ENCODE measurements at regions of chr21 and their contacts with region 1.

Region 1: DNA sequence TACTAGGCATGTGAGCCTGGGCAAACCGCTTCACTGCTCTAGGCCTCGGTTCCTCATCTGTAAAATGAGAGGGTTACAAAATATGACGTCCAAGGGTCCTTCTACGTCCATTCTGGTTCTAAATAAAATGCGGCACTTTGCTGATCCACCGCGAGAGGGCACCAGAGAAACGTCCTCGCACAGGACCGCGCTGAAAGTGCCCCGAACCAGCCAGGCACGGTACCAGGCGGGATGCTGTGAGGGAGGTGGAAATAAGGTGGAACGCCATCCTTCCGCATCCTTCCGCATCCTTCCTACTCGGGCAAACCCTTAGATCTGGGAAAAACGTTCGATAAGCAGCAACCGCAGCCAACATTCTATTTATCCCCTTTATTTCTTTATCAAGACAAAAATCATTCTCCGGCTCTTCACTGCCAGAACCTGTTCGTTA is 60.3 kb upstream of the KRTAP19-8 start:
- DNase-seq: peak; percentile 64 to 68 (median 64)
- H3K4me3 ChIP-seq: no peak overlapping the region
- H3K4me3 Mint-ChIP-seq: peak overlapping the region; percentile 56 to 82 (median 72)
- H3K27ac ChIP-seq: no peak overlapping the region
- H3K27ac Mint-ChIP-seq: peak overlapping the region; percentile 14 to 75 (median 41)
- H3K4me1 ChIP-seq: peaks cover 29% of the 10 kb centered on the region
- H3K4me1 Mint-ChIP-seq: peaks cover 25 to 36% (median 31%) of the 10 kb centered on the region in 4 donors
- H3K27me3 ChIP-seq: no peaks in the 10 kb centered on the region
- H3K27me3 Mint-ChIP-seq: peaks cover 2 to 4% of the 10 kb centered on the region in 2 donors

Region 2: DNA sequence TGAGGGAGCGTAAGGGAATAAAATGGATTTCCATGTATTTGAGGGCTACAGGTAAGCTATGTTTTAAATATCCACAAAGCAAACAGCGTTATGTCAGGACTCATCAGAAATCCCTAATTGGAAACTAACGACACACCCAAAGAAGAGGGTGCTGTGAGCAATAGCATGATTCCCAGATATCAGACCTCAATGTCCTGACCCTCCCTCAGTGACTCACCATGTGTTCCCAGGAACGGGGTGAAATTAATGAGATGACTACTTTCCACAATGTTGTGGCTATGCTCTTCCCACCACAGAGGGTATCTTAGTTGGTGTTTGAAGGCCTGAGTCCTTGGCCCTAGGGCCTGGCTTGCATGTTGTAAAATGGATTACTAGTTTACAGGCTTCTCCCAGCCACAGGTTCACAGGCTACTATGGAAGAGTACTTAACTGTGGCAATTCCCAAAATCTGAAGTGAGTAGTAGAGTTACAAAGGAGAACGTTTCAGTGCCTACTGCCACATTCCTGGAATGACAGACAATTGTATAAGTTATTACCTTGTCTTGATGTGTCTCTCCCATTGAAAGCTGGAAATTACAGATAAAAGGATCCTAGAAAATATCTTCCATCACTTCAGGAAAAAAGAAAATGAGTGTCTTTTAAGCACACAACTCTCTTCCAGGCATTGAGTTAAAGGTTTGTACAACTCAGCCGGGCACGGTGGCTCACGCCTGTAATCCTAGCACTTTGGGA is 215.6 kb before region 1 on chr21:
- CTCF ChIA-PET with region 1: no interaction called
- POLR2A ChIA-PET with region 1: no interaction called
- intact Hi-C with region 1: no loop called
- DNase-seq: no peak
- H3K4me3 ChIP-seq: no peak overlapping the region
- H3K4me3 Mint-ChIP-seq: no peak overlapping the region
- H3K27ac ChIP-seq: no peak overlapping the region
- H3K27ac Mint-ChIP-seq: no peak overlapping the region
- H3K4me1 ChIP-seq: no peaks in the 10 kb centered on the region
- H3K4me1 Mint-ChIP-seq: no peaks in the 10 kb centered on the region
- H3K27me3 ChIP-seq: no peaks in the 10 kb centered on the region
- H3K27me3 Mint-ChIP-seq: no peaks in the 10 kb centered on the region

Region 3: DNA sequence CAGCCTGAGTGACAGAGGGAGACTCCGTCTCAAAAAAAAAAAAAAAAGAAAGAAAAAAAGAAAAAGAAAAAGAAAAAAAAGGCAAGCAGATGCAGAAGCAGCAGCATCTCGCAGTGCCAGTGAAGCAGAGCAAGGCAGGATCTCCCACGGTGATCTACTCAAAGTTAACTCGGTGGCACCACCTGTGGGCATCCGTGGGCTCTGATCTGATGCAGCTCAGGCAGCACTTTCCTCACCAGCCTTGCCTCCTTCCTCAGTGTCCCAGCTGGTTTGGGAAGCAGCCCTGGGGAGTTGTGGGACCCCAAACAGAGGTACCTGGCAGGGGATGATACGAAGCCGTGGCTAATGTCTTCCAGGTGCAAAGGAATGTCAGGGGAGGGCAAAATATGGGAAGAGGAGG is 44.0 kb after region 1 on chr21:
- CTCF ChIA-PET with region 1: interaction called, 10 read pairs
- POLR2A ChIA-PET with region 1: no interaction called
- intact Hi-C with region 1: loop called (anchors 2 kb)
- DNase-seq: peak in 4 of 5 donors; percentile 17 to 23 (median 20)
- H3K4me3 ChIP-seq: no peak overlapping the region
- H3K4me3 Mint-ChIP-seq: no peak overlapping the region
- H3K27ac ChIP-seq: no peak overlapping the region
- H3K27ac Mint-ChIP-seq: peak overlapping the region in 1 of 7 donors; percentile 55
- H3K4me1 ChIP-seq: peaks cover 8% of the 10 kb centered on the region
- H3K4me1 Mint-ChIP-seq: peaks cover 11 to 34% (median 19%) of the 10 kb centered on the region in 4 donors
- H3K27me3 ChIP-seq: no peaks in the 10 kb centered on the region
- H3K27me3 Mint-ChIP-seq: no peaks in the 10 kb centered on the region

Region 4: GRCh38 chr21:31185663-31186062 is 87.1 kb after region 1 on chr21:
- CTCF ChIA-PET with region 1: interaction called, 142 read pairs
- POLR2A ChIA-PET with region 1: interaction called, 51 read pairs
- intact Hi-C with region 1: loop called (anchors 1 kb)
- DNase-seq: peak in 3 of 5 donors; percentile 24 to 68 (median 27)
- H3K4me3 ChIP-seq: peak overlapping the region; percentile 70 to 85
- H3K4me3 Mint-ChIP-seq: peak overlapping the region; percentile 85 to 94 (median 90)
- H3K27ac ChIP-seq: peak overlapping the region; percentile 62
- H3K27ac Mint-ChIP-seq: peak overlapping the region; percentile 70 to 94 (median 92)
- H3K4me1 ChIP-seq: peaks cover 88% of the 10 kb centered on the region
- H3K4me1 Mint-ChIP-seq: peaks cover 58 to 84% (median 70%) of the 10 kb centered on the region in 4 donors
- H3K27me3 ChIP-seq: no peaks in the 10 kb centered on the region
- H3K27me3 Mint-ChIP-seq: no peaks in the 10 kb centered on the region

Region 5: DNA sequence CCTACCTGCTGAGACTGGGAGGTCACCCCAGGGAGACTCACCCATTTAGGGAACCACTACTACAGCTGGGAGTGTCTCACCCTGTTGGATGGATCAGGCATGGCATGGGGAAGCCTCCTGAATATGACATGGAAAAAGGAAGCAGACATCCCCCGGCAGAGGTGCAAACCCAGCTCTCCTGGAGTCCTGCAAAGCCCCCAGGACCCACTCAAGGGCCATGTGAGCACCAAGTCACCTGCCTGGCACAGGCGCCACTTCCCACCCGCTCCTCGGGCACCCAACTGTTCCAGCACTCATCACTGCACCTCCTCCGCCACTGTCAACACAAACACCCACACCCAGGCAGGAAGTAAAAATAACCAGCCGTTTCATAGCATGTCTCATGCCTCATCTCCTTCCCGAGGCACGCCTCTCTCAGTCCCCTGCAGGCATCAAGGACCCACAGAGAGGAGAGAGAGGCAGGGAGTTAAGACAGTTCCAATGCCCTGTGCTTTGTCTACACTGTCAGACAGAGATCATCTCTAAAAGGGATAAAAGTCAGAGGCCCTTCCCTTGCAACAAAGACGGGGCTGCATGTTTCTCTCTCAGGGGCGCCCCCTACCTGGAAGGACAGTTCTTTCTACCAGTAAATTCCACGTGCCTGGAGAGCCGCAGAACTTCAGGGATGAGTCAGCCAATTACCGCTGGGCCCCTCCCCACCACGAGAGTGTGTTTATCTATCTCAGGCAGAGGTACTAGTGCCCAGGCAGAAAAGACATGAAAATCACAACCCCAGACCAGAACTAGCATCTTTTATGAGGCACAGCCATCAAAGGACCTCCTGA is 410.8 kb after region 1 on chr21:
- CTCF ChIA-PET with region 1: interaction called, 3 read pairs
- POLR2A ChIA-PET with region 1: no interaction called
- intact Hi-C with region 1: loop called (anchors 2 kb)
- DNase-seq: peak; percentile 57 to 74 (median 62)
- H3K4me3 ChIP-seq: no peak overlapping the region
- H3K4me3 Mint-ChIP-seq: peak overlapping the region; percentile 36 to 78 (median 55)
- H3K27ac ChIP-seq: no peak overlapping the region
- H3K27ac Mint-ChIP-seq: peak overlapping the region in 6 of 7 donors; percentile 0 to 87 (median 66)
- H3K4me1 ChIP-seq: peaks cover 15% of the 10 kb centered on the region
- H3K4me1 Mint-ChIP-seq: peaks cover 16 to 40% (median 28%) of the 10 kb centered on the region in 4 donors
- H3K27me3 ChIP-seq: no peaks in the 10 kb centered on the region
- H3K27me3 Mint-ChIP-seq: peaks cover 0 to 3% of the 10 kb centered on the region in 2 donors

Region 6: DNA sequence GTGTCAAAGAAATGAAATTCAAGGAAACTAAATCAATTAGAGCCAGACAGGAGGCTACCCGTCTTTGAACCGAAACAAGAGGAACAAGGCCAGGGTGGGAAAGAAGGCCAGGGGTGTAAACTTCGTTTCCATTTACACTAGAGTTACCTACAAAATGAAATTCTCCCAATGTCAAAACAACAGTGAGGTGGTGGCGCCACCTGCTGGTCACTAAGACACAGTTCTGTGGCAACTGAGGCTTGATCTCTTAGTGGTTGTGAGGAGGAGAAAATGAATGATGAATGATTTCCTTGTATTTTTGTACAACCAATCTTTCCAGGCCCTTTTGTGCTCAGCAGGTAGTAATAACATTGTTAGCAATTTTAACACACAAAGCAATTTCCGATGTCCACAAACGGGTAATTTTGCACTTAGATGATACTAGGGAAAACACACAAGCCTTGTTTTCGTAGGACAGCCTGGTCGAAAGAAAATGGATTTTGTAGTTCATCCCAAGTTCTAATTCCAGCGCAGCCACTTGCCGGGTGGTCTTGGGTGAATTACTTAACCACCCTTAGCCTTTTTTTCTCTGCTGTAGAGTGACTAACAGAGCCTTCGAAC is 506.1 kb after region 1 on chr21:
- CTCF ChIA-PET with region 1: interaction called, 21 read pairs
- POLR2A ChIA-PET with region 1: no interaction called
- intact Hi-C with region 1: loop called (anchors 1 kb)
- DNase-seq: peak; percentile 52 to 63 (median 61)
- H3K4me3 ChIP-seq: no peak overlapping the region
- H3K4me3 Mint-ChIP-seq: peak overlapping the region in 1 of 8 donors; percentile 23
- H3K27ac ChIP-seq: no peak overlapping the region
- H3K27ac Mint-ChIP-seq: peak overlapping the region in 1 of 7 donors; percentile 43
- H3K4me1 ChIP-seq: no peaks in the 10 kb centered on the region
- H3K4me1 Mint-ChIP-seq: peaks cover 0 to 5% (median under 1%) of the 10 kb centered on the region in 4 donors
- H3K27me3 ChIP-seq: no peaks in the 10 kb centered on the region
- H3K27me3 Mint-ChIP-seq: peaks cover 3 to 6% of the 10 kb centered on the region in 2 donors

Measured in CD4-positive, alpha-beta memory T cell (primary cell).